ENCODE measurements at regions of chr11 and their contacts with region 1.

Region 1: DNA sequence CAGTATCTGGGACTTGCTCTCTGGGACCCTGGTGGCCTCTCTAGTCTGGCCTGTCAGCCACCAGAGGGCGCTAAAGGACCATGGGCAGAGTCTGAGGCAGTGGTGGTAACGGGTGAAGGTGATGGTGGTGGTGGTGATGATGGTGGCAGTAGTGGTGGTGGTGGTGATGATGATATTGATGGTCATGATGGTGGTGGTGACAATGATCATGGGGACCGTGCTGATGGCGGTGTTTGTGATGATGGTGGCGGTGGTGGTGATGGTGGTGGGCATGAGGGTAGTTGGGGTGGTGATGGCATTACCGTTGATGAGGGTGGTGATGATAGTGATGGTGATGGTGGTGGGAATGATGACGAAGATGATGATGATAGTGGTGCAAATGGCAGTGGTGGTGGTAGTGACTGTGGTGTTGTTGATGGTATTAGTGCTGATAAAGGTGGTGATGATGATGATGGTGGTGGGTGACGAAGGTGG is 16.0 kb downstream of the TRPM5 start:
- DNase-seq: peak in 3 of 4 donors; percentile 75 to 92 (median 81)
- ATAC-seq: peak; percentile 91
- H3K4me3 ChIP-seq: no peak overlapping the region
- H3K27ac ChIP-seq: no peak overlapping the region
- H3K4me1 ChIP-seq: no peaks in the 10 kb centered on the region
- H3K27me3 ChIP-seq: no peaks in the 10 kb centered on the region
- CTCF ChIP-seq: peak; percentile 87 to 94

Region 2: DNA sequence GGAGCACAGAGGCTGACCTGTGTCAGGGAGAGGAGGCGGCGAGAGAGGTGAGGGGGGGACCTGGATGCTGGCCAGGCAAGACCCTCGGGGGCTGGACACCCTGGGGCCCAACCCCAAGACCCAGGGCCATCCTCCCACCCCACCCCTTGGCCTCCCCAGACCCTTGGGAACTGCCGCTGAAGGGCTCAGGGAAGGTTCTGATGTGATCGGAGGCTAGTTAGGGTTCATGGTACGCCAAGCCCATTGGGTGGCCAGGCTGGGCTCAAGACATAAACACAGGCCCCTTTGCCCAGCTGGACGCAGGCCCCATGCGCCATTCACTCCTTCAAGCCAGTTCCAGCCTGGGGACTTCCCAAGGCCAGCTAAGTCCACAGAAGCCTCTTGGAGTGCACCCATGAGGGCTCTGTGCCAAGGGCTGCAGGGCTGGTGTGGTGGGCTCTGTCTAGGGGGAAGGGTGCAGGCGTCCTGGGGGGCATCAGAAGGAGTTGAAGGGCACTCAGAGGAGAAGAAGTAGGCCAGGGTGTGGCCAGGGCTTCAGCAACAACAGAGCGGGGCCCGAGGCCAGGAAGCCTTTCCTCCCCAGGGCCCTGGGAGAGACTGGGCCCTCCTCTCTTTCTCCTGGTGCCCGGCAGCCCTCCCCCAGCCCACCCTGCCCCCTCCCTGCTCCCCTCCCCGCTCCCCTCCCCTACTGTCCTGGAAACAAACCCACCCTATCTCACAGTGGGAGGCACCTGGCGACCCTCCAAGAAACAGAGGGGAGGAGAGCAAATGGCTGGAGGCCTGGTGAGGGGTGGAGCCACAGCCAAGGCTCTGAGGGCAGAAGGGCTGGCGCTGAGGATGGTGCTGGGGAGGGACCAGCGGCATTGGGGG is 113.6 kb before region 1 on chr11:
- intact Hi-C with region 1: no loop called
- DNase-seq: peak; percentile 77 to 98 (median 88)
- ATAC-seq: peak; percentile 80
- H3K4me3 ChIP-seq: no peak overlapping the region
- H3K27ac ChIP-seq: peak overlapping the region; percentile 33 to 61
- H3K4me1 ChIP-seq: peaks cover 8 to 12% of the 10 kb centered on the region in 2 donors
- H3K27me3 ChIP-seq: no peaks in the 10 kb centered on the region
- CTCF ChIP-seq: no peak

Region 3: GRCh38 chr11:2526808-2527381 is 98.5 kb after region 1 on chr11:
- intact Hi-C with region 1: loop called (anchors 2 to 5 kb)
- DNase-seq: peak in 2 of 4 donors; percentile 80 to 89
- ATAC-seq: peak; percentile 47
- H3K4me3 ChIP-seq: no peak overlapping the region
- H3K27ac ChIP-seq: peak overlapping the region in 1 of 2 donors; percentile 55
- H3K4me1 ChIP-seq: peaks cover 0 to 14% of the 10 kb centered on the region in 2 donors
- H3K27me3 ChIP-seq: no peaks in the 10 kb centered on the region
- CTCF ChIP-seq: no peak

Region 4: GRCh38 chr11:2532704-2533586 is 104.6 kb after region 1 on chr11:
- intact Hi-C with region 1: loop called (anchors 2 to 5 kb)
- DNase-seq: peak; percentile 90 to 99 (median 92)
- ATAC-seq: peak; percentile 91
- H3K4me3 ChIP-seq: peak overlapping the region in 1 of 2 donors; percentile 24
- H3K27ac ChIP-seq: peak overlapping the region in 1 of 2 donors; percentile 13
- H3K4me1 ChIP-seq: peaks cover 7 to 23% of the 10 kb centered on the region in 2 donors
- H3K27me3 ChIP-seq: no peaks in the 10 kb centered on the region
- CTCF ChIP-seq: peak; percentile 99

Region 5: DNA sequence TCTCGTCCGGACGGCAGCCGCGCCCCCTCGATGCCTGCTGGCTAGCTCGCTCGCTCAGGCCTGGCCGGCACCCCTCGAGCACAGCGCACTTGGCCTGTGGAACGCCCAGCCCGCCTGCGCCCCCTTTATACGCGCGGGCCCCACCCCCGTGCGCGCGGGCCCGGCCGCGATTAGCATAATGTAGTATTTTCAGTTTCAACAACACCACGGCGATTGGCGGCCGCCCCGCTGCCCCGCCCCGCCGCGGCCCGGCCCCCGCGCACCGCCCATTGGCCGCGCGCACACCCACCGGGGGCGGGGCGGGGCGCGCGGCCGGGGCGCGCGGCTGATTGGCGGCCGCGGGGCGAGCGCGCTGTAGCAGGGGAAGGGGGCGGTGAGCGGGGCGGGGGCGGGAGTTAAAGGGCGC is 457.3 kb after region 1 on chr11 and contains the start of gene CDKN1C:
- intact Hi-C with region 1: loop called in 1 of 2 experiments (anchors 5 kb)
- DNase-seq: peak; percentile 87 to 95 (median 94)
- ATAC-seq: peak; percentile 85
- H3K4me3 ChIP-seq: peak within 1 kb of the TSS; percentile 60 to 75
- H3K27ac ChIP-seq: peak within 1 kb of the TSS; percentile 67 to 75
- H3K4me1 ChIP-seq: peaks cover under 1 to 37% of the 10 kb centered on the region in 2 donors
- H3K27me3 ChIP-seq: peaks cover 0 to 62% of the 10 kb centered on the region in 2 donors
- CTCF ChIP-seq: no peak
- polyA plus RNA-seq, gene CDKN1C: 52.2 to 90.1 (median 74.3) TPM

Measured in left lung (tissue), 14 donors.